ENCODE measurements at regions of chr6 and their contacts with region 1.

Region 1: GRCh38 chr6:130322673-130323268 is 43.0 kb upstream of the TMEM200A start:
- DNase-seq: peak; percentile 52
- H3K4me3 ChIP-seq: no peak overlapping the region
- H3K27ac ChIP-seq: no peak overlapping the region
- H3K4me1 ChIP-seq: no peaks in the 10 kb centered on the region
- H3K27me3 ChIP-seq: no peaks in the 10 kb centered on the region
- CTCF ChIP-seq: peak; percentile 92

Region 2: DNA sequence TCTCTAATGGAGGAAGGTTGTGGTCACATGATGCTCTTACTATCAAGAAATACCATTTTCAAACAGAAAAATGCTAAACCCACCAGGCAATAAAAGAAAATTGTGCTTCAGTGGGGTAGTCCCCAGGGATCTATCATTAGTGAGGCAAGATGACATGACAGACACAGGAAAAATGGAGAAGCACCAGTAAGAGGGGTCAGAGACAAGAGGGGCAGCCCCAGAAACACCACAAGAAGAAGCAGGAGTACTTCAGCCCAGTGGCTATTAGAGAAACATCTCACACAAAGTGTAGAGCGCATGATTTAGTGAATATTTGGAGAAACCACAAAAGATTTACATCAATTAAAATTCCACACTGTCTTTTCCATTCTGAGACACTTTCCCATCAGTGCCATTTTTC is 32.8 kb after region 1 on chr6:
- intact Hi-C with region 1: no loop called
- DNase-seq: no peak
- H3K4me3 ChIP-seq: no peak overlapping the region
- H3K27ac ChIP-seq: no peak overlapping the region
- H3K4me1 ChIP-seq: no peaks in the 10 kb centered on the region
- H3K27me3 ChIP-seq: no peaks in the 10 kb centered on the region
- CTCF ChIP-seq: no peak

Region 3: GRCh38 chr6:130697995-130698535 is 375.3 kb after region 1 on chr6:
- intact Hi-C with region 1: loop called (anchors 2 kb)
- DNase-seq: peak; percentile 47
- H3K4me3 ChIP-seq: no peak overlapping the region
- H3K27ac ChIP-seq: no peak overlapping the region
- H3K4me1 ChIP-seq: no peaks in the 10 kb centered on the region
- H3K27me3 ChIP-seq: no peaks in the 10 kb centered on the region
- CTCF ChIP-seq: peak; percentile 71

Region 4: DNA sequence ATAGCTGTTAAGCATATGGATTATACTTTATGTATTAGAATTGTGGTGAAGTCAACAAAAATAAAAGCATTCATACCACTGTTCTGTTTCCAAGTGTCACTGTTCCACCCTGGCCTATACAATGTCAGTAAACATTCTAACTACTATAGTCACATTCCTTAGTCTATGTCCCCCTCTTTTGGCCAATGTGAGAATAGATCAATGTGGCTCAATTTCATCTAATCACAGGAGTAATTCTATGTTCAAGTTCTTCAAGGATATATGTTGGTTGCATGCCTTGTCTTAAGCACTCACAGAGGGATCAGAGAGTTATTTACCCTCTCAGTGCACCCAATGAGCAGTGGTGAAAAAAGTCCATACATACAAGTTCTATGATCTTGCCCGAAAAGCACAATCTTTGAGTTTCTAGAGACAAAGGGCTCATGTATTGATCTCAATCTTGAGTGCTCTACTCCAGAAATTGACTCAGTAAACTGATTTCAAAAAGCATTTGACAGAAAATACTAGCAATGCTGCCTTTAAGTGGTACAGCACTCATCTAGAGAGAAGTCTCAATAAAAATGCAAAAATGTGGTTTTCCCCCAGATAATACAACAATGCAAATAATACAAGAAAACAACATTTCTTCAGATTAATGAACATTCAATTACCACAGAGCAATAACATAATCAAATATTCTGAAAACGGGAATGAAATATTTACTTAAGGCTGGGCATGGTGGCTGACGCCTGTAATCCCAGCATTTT is 521.0 kb after region 1 on chr6:
- intact Hi-C with region 1: loop called (anchors 10 kb)
- DNase-seq: no peak
- H3K4me3 ChIP-seq: no peak overlapping the region
- H3K27ac ChIP-seq: no peak overlapping the region
- H3K4me1 ChIP-seq: no peaks in the 10 kb centered on the region
- H3K27me3 ChIP-seq: no peaks in the 10 kb centered on the region
- CTCF ChIP-seq: peak; percentile 25